ENCODE measurements at regions of chr20 and their contacts with region 1.

Region 1: DNA sequence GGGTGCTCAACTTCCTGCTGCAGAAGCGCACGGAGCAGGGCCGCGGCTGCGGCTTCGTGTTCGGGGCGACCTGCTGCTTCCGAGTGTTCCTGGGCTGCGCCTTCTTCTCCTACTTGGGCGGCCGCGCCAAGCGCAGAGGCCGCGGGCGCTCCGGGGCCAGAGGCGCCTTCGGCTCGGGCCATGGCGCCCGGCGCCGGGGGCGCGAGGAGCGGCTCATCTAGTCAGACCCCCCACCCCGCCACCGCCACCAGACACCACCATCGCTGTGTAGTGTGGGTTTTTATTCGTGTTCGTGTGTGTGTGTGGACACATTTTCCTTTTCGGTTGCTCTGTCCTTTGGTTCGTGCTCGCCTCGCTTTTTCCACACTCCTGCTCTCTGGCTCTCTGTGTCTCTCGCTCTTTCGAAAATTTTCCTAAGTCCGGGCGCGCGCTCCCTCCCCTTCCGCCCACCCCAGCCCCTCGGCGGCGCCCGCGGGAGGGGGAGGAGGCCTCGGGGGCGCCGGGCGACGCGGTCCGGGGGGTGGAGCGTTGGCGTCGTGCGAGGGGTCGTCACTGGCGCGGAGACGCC is 38.1 kb downstream of the GNAS start:
- DNase-seq: peak; percentile 77 to 80
- H3K4me3 ChIP-seq: peak overlapping the region; percentile 39 to 78 (median 75)
- H3K27ac ChIP-seq: peak overlapping the region; percentile 99 to 100 (median 99)
- H3K4me1 ChIP-seq: peaks cover 20 to 28% of the 10 kb centered on the region in 2 donors
- H3K27me3 ChIP-seq: no peaks in the 10 kb centered on the region
- CTCF ChIP-seq: peak in 1 of 6 experiments; percentile 7
- POLR2A ChIP-seq: peak in 1 of 2 donors; percentile 82

Region 2: GRCh38 chr20:59006864-59007664 is 116.5 kb after region 1 on chr20 and contains the start of gene CTSZ:
- intact Hi-C with region 1: loop called (anchors 10 kb)
- DNase-seq: peak; percentile 53
- H3K4me3 ChIP-seq: peak within 1 kb of the TSS; percentile 34 to 50 (median 46)
- H3K27ac ChIP-seq: peak within 1 kb of the TSS; percentile 12 to 94 (median 73)
- H3K4me1 ChIP-seq: peaks cover 48 to 51% of the 10 kb centered on the region in 2 donors
- H3K27me3 ChIP-seq: no peaks in the 10 kb centered on the region
- CTCF ChIP-seq: no peak
- POLR2A ChIP-seq: peak in 1 of 2 donors; percentile 67
- total RNA-seq, gene CTSZ: 152 to 256 (median 212) TPM

Region 3: GRCh38 chr20:59042796-59043660 is 152.4 kb after region 1 on chr20:
- intact Hi-C with region 1: loop called (anchors 5 kb)
- DNase-seq: peak; percentile 94 to 97
- H3K4me3 ChIP-seq: peak overlapping the region; percentile 56 to 88 (median 78)
- H3K27ac ChIP-seq: peak overlapping the region; percentile 73 to 94 (median 92)
- H3K4me1 ChIP-seq: peaks cover 48 to 55% of the 10 kb centered on the region in 2 donors
- H3K27me3 ChIP-seq: no peaks in the 10 kb centered on the region
- CTCF ChIP-seq: no peak
- POLR2A ChIP-seq: peak in 1 of 2 donors; percentile 77